Activated CD8-positive, alpha-beta T cell treated with anti-CD3 and anti-CD28 coated beads, Interleukin-2, amount 10 ng/mL, durations not matched to agents 7 days and 5 days (primary cell): ENCODE measurements at regions of chr5 and their contacts with region 1.

Region 1: GRCh38 chr5:66821688-66822429 is 225.7 kb downstream of the MAST4 start:
- DNase-seq: peak; percentile 69
- ATAC-seq: peak; percentile 79
- H3K4me3 Mint-ChIP-seq: peak overlapping the region; percentile 44
- H3K27ac Mint-ChIP-seq: peak overlapping the region; percentile 88
- H3K4me1 Mint-ChIP-seq: peaks cover 44% of the 10 kb centered on the region
- H3K27me3 Mint-ChIP-seq: no peaks in the 10 kb centered on the region

Region 2: DNA sequence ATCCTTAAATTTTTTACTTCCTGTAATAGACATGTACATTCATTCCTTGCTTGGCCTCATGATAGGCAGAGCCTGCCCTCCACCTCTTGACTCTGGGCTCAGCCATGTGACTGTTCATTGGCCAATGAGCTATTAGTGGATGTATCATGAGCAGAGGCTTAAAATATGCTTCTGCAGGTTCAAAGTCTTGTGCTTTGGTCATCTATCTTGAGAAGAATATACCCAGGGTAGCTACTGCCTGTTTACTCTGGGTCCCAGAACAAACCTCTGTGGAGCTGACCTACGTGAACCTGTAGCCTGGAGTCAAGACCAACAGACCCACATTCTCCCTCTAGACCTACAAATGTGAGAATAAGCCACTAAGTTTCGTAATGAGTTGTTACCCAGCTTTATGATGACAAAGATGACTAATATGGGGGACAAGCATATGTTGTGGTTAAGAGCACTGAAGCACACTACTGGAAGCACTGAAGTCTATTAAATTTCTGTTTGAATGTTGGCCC is 18.7 kb after region 1 on chr5:
- CTCF ChIA-PET with region 1: interaction called, 97 read pairs
- POLR2A ChIA-PET with region 1: interaction called, 4 read pairs
- DNase-seq: peak; percentile 62
- ATAC-seq: peak; percentile 92
- H3K4me3 Mint-ChIP-seq: peak overlapping the region; percentile 34
- H3K27ac Mint-ChIP-seq: peak overlapping the region; percentile 90
- H3K4me1 Mint-ChIP-seq: peaks cover 57% of the 10 kb centered on the region
- H3K27me3 Mint-ChIP-seq: no peaks in the 10 kb centered on the region